HEK293T (cell line): ENCODE measurements at regions of chr6 and their contacts with region 1.

Region 1: GRCh38 chr6:33417903-33418689 is at the start of gene CUTA:
- DNase-seq: peak; percentile 92

Region 2: GRCh38 chr6:33430991-33431879 is 13.1 kb after region 1 on chr6:
- CTCF ChIA-PET with region 1: interaction called, 4 read pairs
- POLR2A ChIA-PET with region 1: interaction called, 17 read pairs
- DNase-seq: peak; percentile 60

Region 3: GRCh38 chr6:33570806-33571636 is 152.9 kb after region 1 on chr6:
- CTCF ChIA-PET with region 1: no interaction called
- POLR2A ChIA-PET with region 1: no interaction called
- DNase-seq: peak; percentile 86